ENCODE measurements at regions of chrX and their contacts with region 1.

Region 1: GRCh38 chrX:74251006-74251930 is 52.7 kb upstream of the ZCCHC13 start:
- DNase-seq: no peak
- H3K4me3 ChIP-seq: no peak overlapping the region
- H3K27ac ChIP-seq: no peak overlapping the region
- H3K4me1 ChIP-seq: peaks cover 0 to 9% (median 1%) of the 10 kb centered on the region in 4 experiments; a peak in 2 of 7 replicates
- H3K27me3 ChIP-seq: no peaks in the 10 kb centered on the region
- CTCF ChIP-seq: no peak
- EP300 ChIP-seq: no peak
- POLR2A ChIP-seq: no peak
- RAD21 ChIP-seq: no peak

Region 2: GRCh38 chrX:74262452-74263209 is 11.4 kb after region 1 on chrX:
- CTCF ChIA-PET with region 1: interaction called, 3 read pairs
- POLR2A ChIA-PET with region 1: interaction called, 15 read pairs
- DNase-seq: no peak
- H3K4me3 ChIP-seq: no peak overlapping the region
- H3K27ac ChIP-seq: no peak overlapping the region
- H3K4me1 ChIP-seq: peaks cover 3 to 13% (median 6%) of the 10 kb centered on the region in 4 experiments; a peak in 6 of 7 replicates
- H3K27me3 ChIP-seq: no peaks in the 10 kb centered on the region
- CTCF ChIP-seq: no peak
- EP300 ChIP-seq: no peak
- POLR2A ChIP-seq: no peak
- RAD21 ChIP-seq: no peak

Region 3: GRCh38 chrX:74272230-74272629 is 21.0 kb after region 1 on chrX:
- CTCF ChIA-PET with region 1: no interaction called
- POLR2A ChIA-PET with region 1: interaction called, 12 read pairs
- DNase-seq: no peak
- H3K4me3 ChIP-seq: no peak overlapping the region
- H3K27ac ChIP-seq: no peak overlapping the region
- H3K4me1 ChIP-seq: no peaks in the 10 kb centered on the region
- H3K27me3 ChIP-seq: no peaks in the 10 kb centered on the region
- CTCF ChIP-seq: no peak
- EP300 ChIP-seq: no peak
- POLR2A ChIP-seq: no peak
- RAD21 ChIP-seq: no peak

Region 4: DNA sequence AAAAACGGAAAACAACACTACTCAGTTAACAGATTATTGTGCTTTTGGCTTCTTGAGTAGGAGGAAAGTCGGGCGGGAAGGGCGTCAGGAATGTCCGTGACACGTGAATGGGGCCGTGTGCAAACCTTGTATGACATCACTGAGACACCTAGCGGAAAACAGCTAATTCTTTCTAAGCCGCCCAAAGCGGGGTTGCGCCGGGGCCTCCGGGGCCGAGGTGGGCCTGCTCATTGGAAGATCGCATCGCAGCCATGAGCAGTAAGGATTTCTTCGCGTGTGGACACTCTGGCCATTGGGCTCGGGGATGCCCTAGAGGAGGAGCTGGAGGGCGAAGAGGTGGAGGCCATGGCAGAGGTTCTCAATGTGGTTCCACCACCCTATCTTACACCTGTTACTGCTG is 52.7 kb after region 1 on chrX and contains the start of gene ZCCHC13:
- CTCF ChIA-PET with region 1: no interaction called
- POLR2A ChIA-PET with region 1: no interaction called
- DNase-seq: no peak
- H3K4me3 ChIP-seq: no peak within 1 kb of the TSS
- H3K27ac ChIP-seq: no peak within 1 kb of the TSS
- H3K4me1 ChIP-seq: 0 out of 7 replicates have a peak, but pooled peaks cover 0 to 2% (median 0%) of the 10 kb centered on the region in 4 experiments
- H3K27me3 ChIP-seq: no peaks in the 10 kb centered on the region
- CTCF ChIP-seq: no peak
- EP300 ChIP-seq: no peak
- POLR2A ChIP-seq: no peak
- RAD21 ChIP-seq: no peak
- total RNA-seq, gene ZCCHC13: not detected in 2 replicates